Activated CD4-positive, alpha-beta T cell treated with anti-CD3 and anti-CD28 coated beads, Interleukin-2, amount 10 ng/mL, durations not matched to agents 24 days and 14 days (primary cell): ENCODE measurements at regions of chr3 and their contacts with region 1.

Region 1: DNA sequence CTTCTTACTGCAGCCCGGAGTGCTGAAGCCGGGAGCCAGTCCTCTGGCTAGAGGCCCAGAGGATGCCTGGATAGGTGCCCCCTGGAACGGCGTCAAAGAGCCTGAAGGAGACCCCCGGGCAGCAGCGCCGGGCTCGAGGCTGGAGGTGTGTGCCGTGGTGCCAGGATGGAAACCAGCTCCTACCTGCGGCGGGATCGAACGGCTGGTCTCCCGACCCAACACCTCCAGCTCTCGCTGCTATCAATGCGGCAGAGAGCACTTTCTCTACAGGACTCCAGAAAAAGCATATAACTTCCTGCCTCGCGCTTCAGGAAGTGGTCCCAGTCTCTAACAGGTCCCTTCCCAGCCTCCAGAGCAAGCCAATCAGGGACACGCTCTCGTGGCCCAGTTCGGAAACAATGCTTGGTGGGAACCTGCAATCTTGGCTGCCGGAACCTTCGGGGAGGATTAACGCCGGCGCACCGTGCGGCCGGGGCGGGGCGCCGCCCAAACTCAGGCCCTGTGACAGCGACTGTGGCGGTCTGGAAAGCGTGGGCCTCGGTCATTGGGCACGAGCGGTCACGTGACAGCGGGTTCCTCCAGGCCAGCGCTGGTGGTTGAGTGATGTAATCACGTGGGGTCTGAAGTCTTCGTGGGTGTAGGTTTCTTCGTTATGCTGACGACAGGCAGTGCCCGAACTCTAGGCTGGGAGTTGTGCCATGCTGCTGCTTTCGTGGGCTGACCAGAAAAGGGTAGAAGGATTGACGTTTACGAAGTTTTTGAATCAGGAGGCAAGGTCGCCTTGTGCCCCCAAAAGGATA is at the start of gene SLC33A1:
- DNase-seq: peak; percentile 99
- H3K4me3 Mint-ChIP-seq: peak within 1 kb of the TSS; percentile 97
- H3K27ac Mint-ChIP-seq: peak within 1 kb of the TSS; percentile 98
- H3K4me1 Mint-ChIP-seq: peaks cover 31% of the 10 kb centered on the region
- H3K27me3 Mint-ChIP-seq: peaks cover 2% of the 10 kb centered on the region
- total RNA-seq, gene SLC33A1: 27.4 and 28.0 TPM in 2 replicates

Region 2: GRCh38 chr3:155753036-155753639 is 101.2 kb before region 1 on chr3:
- intact Hi-C with region 1: loop called (anchors 5 kb)
- DNase-seq: peak; percentile 58
- H3K4me3 Mint-ChIP-seq: no peak overlapping the region
- H3K27ac Mint-ChIP-seq: no peak overlapping the region
- H3K4me1 Mint-ChIP-seq: no peaks in the 10 kb centered on the region
- H3K27me3 Mint-ChIP-seq: peaks cover 10% of the 10 kb centered on the region

Region 3: GRCh38 chr3:155766206-155766605 is 88.1 kb before region 1 on chr3:
- intact Hi-C with region 1: no loop called
- DNase-seq: no peak
- H3K4me3 Mint-ChIP-seq: no peak overlapping the region
- H3K27ac Mint-ChIP-seq: no peak overlapping the region
- H3K4me1 Mint-ChIP-seq: no peaks in the 10 kb centered on the region
- H3K27me3 Mint-ChIP-seq: no peaks in the 10 kb centered on the region

Region 4: GRCh38 chr3:155870133-155870944 is 16.0 kb after region 1 on chr3 and contains the start of gene GMPS:
- intact Hi-C with region 1: loop called (anchors 1 kb)
- DNase-seq: no peak
- H3K4me3 Mint-ChIP-seq: peak within 1 kb of the TSS; percentile 88
- H3K27ac Mint-ChIP-seq: peak within 1 kb of the TSS; percentile 96
- H3K4me1 Mint-ChIP-seq: peaks cover 19% of the 10 kb centered on the region
- H3K27me3 Mint-ChIP-seq: no peaks in the 10 kb centered on the region
- total RNA-seq, gene GMPS: 150 and 151 TPM in 2 replicates

Region 5: GRCh38 chr3:156816800-156817645 is 962.7 kb after region 1 on chr3:
- intact Hi-C with region 1: loop called (anchors 10 kb)
- DNase-seq: peak; percentile 97
- H3K4me3 Mint-ChIP-seq: peak overlapping the region; percentile 92
- H3K27ac Mint-ChIP-seq: peak overlapping the region; percentile 98
- H3K4me1 Mint-ChIP-seq: peaks cover 52% of the 10 kb centered on the region
- H3K27me3 Mint-ChIP-seq: no peaks in the 10 kb centered on the region